ENCODE measurements at regions of chr12 and their contacts with region 1.

Region 1: DNA sequence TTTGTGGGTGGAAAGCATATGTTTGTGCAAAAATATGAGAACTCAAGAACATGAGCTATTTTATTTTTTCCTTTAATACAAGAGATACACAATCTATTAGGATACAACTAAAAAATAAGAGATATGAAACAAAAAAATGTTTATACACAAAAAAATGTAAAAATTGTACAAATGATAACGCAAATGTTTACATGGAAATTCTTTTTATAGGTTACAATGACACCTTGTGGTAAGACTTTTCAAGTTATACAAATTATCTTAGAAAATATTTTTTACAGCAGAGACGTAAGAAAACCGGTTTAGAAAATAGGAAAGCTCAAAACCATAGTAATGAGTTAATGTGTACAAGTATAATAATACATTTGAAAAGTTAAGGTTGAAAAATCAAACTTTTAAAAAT is 25.5 kb downstream of the CEP83 start:
- DNase-seq: no peak
- ATAC-seq: no peak
- H3K4me3 ChIP-seq: no peak overlapping the region
- H3K27ac ChIP-seq: no peak overlapping the region
- H3K4me1 ChIP-seq: no peaks in the 10 kb centered on the region
- H3K27me3 ChIP-seq: no peaks in the 10 kb centered on the region
- CTCF ChIP-seq: peak in 1 of 3 experiments; percentile 16; a peak in 2 of 6 replicates
- POLR2A ChIP-seq: no peak
- RAD21 ChIP-seq: peak; percentile 39

Region 2: DNA sequence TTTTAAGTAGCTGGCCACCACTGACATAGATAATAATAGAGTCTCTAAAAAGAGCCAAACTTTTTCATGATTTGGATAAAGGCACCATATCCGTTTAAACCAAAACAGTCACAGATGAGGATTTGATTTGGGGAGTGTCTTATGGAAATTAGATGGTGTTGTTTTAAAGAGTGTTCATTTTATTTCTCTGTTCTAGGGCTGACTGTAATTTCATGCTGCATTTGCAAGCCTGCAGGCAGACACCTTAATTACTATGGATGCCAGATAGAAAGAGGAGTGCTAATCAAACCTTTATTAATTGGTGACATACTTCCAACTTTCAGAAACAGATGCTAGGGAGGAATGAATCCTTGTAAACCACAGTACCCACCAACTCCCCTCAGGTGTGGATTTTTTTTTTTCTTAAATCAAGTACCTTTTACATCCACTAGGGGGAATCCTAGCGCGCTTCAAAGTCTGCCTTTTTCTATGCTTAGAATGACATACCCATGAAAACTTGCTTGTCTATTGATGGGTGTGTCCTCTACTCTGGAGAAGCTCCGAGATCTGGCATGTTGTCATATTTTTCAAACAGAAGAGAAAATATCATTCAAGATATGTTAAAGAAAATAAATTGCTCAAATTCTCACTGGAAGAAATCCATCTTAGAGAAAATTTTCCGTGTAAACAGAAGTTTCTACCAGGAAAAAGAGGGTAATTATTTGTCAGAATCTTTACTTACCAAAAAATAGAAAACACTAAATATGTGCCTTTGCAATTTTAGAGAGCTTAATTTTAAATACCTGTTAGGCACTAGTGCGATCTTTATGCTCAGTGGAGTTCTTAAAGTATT is 300.0 kb before region 1 on chr12:
- CTCF ChIA-PET with region 1: no interaction called
- POLR2A ChIA-PET with region 1: no interaction called
- RAD21 ChIA-PET with region 1: no interaction called
- intact Hi-C with region 1: loop called (anchors 5 kb)
- DNase-seq: peak; percentile 61
- ATAC-seq: peak; percentile 83
- H3K4me3 ChIP-seq: no peak overlapping the region
- H3K27ac ChIP-seq: no peak overlapping the region
- H3K4me1 ChIP-seq: peaks cover 0 to 2% of the 10 kb centered on the region in 2 experiments; a peak in 1 of 4 replicates
- H3K27me3 ChIP-seq: no peaks in the 10 kb centered on the region; the same call in 1 of the 2 replicates
- CTCF ChIP-seq: peak; percentile 67 to 76 (median 68); a peak in 5 of 6 replicates
- POLR2A ChIP-seq: no peak
- RAD21 ChIP-seq: peak; percentile 73

Region 3: GRCh38 chr12:94244165-94245133 is 189.7 kb before region 1 on chr12:
- CTCF ChIA-PET with region 1: no interaction called
- POLR2A ChIA-PET with region 1: no interaction called
- RAD21 ChIA-PET with region 1: no interaction called
- intact Hi-C with region 1: no loop called
- DNase-seq: no peak
- ATAC-seq: no peak
- H3K4me3 ChIP-seq: no peak overlapping the region
- H3K27ac ChIP-seq: no peak overlapping the region
- H3K4me1 ChIP-seq: no peaks in the 10 kb centered on the region
- H3K27me3 ChIP-seq: 0 out of 2 replicates have a peak, but pooled peaks cover 9% of the 10 kb centered on the region
- CTCF ChIP-seq: no peak
- POLR2A ChIP-seq: no peak
- RAD21 ChIP-seq: no peak

Measured in HCT116 (cell line).